ENCODE measurements at regions of chr7 and their contacts with region 1.

Region 1: GRCh38 chr7:20164425-20165145 is 52.6 kb downstream of the MACC1 start:
- DNase-seq: no peak
- H3K4me3 ChIP-seq: no peak overlapping the region
- H3K27ac ChIP-seq: no peak overlapping the region
- H3K4me1 ChIP-seq: no peaks in the 10 kb centered on the region
- H3K27me3 ChIP-seq: no peaks in the 10 kb centered on the region
- CTCF ChIP-seq: no peak

Region 2: DNA sequence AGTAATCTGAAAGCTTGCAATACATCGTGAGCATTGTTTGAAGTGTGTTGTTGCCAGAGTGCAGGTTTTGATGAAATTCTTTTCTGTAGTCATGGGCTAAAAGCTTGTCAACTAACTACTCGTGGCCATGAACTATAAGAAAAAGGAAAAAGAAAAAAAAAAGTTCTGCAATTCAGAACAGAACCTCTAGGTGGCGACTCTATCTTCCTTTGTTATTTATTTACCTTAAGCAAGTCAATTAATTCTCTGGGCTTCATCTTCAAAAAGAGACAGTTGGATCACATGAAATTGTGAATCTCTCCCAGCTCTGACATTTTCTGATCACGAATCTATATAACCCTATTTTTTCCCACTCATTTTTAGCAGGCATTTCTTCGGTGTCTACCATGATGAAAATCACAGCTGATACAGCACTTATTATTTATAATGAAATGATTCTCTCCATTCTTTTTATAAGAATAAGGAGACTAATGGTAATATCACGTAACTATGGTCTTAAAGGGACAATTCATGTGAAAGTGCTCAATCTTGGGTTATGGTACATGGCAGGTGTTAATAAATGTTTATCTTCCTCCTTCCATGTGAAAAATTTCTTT is 410.0 kb before region 1 on chr7:
- intact Hi-C with region 1: loop called (anchors 10 kb)
- DNase-seq: peak in 2 of 5 donors; percentile 42 to 43
- H3K4me3 ChIP-seq: no peak overlapping the region
- H3K27ac ChIP-seq: no peak overlapping the region
- H3K4me1 ChIP-seq: no peaks in the 10 kb centered on the region
- H3K27me3 ChIP-seq: no peaks in the 10 kb centered on the region
- CTCF ChIP-seq: peak; percentile 49

Region 3: DNA sequence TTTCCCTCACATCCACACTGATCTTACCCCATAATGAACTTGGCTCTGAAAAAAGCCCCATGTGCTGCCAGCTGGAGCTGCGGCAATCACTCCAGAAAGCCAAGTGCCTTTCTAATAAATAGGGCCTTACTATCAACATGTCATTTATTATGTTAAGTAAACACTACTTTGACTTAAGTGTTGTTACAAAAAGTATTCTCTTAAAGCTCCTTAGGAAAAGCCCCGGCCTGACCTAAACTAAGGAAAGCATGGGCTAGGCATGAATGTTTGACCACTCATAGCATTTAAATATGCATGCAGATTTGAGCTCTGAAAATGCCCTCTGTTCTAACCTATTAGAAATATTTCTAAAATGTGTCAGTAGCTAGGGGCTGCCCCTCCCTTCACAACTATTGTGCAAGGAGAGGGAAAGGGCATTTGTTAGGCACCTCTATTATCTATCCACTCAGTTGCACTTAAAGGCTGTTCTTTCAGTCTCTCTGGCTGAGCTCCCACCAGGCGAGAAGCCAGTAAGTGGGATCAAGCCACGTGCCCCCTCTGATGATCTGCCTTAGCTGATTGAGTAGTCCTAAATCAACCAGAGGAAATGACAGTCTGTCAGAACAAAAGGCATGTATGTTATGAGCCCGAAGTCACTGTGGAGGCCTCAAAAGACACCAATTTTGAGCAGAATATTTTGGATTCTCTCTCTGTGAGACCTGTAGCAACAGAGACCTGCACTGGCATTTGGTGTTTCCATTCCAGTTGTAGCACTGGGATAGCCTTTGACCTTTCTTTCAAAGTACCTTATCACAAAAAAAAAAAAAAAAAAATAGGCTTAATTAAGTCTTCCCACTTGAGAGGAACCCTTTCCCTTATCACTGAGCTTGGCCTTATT is 243.2 kb after region 1 on chr7:
- intact Hi-C with region 1: no loop called
- DNase-seq: peak in 2 of 5 donors; percentile 30 to 67
- H3K4me3 ChIP-seq: no peak overlapping the region
- H3K27ac ChIP-seq: peak overlapping the region in 1 of 2 donors; percentile 18
- H3K4me1 ChIP-seq: no peaks in the 10 kb centered on the region
- H3K27me3 ChIP-seq: no peaks in the 10 kb centered on the region
- CTCF ChIP-seq: no peak